ENCODE measurements at regions of chr2 and their contacts with region 1.

Region 1: DNA sequence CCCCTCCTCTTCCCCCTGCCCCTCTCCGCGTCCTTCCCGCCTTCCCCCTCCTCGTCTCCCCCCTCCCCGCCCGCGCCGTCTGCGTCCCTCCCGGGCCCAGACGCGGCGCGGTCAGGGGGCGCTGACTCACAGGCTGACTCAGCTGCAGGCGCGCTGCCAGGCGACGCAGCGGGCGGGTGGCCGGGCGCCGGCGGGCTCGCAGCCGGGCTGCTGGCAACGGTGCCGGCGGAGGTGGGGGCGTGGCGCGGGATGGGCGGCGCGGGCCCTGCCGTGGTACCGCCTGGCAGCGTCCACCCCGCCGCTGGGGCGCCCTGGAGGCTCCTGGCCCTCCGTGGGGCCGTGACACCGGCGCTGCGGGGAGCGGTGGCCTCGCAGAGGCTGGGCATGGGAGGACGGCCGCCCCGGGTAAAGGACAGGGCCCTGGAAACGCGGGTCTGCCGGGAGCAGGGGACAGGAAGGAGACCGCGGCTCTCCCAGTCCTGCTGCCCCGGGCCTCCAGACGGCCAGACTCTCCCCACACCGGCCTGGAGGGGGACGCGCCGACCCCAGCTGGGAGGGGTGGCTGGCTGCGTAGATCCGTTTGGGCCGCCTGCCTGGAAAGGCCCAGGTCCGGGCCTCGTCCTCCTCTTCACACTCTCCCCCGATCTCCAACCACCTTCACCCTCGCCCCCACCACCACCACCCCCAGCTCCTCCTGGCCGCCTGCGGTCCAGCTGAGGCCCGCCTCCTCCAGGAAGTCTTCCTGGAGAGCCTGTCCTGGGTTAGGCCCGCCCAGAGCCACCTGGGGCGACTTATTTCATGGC is 10.0 kb upstream of the PROC start:
- DNase-seq: peak; percentile 94
- ATAC-seq: peak; percentile 87
- H3K4me3 Mint-ChIP-seq: no peak overlapping the region
- H3K27ac Mint-ChIP-seq: peak overlapping the region; percentile 67
- H3K4me1 Mint-ChIP-seq: peaks cover 32% of the 10 kb centered on the region
- H3K27me3 Mint-ChIP-seq: peaks cover 6% of the 10 kb centered on the region

Region 2: DNA sequence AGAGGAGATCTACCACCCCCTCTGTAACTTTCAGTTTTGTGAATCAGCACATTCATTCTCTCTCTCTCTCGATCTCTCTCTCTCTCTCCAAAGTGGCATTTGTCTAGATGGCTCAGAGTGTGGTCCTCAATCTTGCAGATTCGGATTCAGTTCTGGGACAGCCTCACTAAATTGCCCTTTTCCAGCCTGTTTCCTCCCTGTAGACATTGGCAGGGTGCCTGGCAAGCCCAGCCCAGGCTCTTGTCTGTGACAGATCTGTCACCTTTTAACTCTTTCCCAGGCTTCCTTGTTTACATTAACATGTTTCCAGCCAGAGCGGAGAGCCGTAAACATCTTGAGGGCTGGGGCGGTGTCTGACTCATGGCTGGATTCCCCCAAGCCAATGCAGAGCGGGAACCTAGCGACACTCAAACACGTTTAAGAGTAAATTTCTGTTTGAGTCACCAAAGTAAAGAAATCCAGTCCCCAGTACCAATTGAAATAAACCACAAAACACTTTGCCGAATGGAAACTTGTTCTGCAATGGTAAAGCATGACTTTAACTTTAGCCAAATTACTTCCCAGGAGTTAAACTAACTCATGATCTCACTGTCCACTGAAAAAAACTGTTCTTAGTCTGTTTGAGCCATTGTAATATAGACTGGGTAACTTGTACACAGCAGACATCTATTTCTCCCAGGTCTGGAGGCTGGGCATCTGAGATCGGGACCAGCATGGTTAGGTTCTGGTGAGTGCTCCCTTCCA is 181.5 kb before region 1 on chr2:
- CTCF ChIA-PET with region 1: no interaction called
- POLR2A ChIA-PET with region 1: no interaction called
- intact Hi-C with region 1: loop called in 1 of 2 experiments (anchors 2 kb)
- DNase-seq: peak; percentile 78
- ATAC-seq: peak; percentile 94
- H3K4me3 Mint-ChIP-seq: peak overlapping the region; percentile 30
- H3K27ac Mint-ChIP-seq: no peak overlapping the region
- H3K4me1 Mint-ChIP-seq: peaks cover 11% of the 10 kb centered on the region
- H3K27me3 Mint-ChIP-seq: peaks cover 31% of the 10 kb centered on the region

Region 3: DNA sequence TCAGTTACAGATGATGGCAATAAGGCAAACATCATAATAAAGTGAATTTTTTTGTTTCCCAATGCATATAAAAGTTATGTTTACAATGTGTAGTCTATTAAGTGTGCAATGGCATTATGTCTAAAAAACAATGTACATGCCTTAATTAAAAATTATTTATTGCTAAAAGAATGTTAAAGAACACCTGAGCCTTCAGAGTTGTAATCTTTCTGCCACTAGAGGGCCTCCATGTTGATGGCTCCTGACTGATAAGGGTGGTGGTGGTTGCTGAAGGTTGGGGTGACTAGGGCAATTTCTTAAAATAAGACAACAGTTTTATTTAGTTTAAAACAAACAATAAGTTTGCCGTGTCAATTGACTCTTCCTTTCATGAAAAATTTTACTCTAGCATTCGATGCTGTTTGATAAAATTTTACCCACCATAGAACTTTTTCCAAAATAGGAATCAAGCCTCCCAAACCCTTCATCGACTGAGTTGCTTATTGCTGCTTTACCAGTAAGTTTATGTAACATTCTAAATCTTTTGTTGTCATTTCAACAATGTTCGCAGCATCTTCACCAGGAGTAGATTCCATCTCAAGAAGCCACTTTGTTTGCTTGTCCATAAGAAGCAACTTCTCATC is 52.7 kb before region 1 on chr2:
- CTCF ChIA-PET with region 1: interaction called, 3 read pairs
- POLR2A ChIA-PET with region 1: no interaction called
- intact Hi-C with region 1: loop called in 1 of 2 experiments (anchors 2 kb)
- DNase-seq: peak; percentile 45
- ATAC-seq: peak; percentile 65
- H3K4me3 Mint-ChIP-seq: no peak overlapping the region
- H3K27ac Mint-ChIP-seq: no peak overlapping the region
- H3K4me1 Mint-ChIP-seq: peaks cover 53% of the 10 kb centered on the region
- H3K27me3 Mint-ChIP-seq: no peaks in the 10 kb centered on the region

Region 4: DNA sequence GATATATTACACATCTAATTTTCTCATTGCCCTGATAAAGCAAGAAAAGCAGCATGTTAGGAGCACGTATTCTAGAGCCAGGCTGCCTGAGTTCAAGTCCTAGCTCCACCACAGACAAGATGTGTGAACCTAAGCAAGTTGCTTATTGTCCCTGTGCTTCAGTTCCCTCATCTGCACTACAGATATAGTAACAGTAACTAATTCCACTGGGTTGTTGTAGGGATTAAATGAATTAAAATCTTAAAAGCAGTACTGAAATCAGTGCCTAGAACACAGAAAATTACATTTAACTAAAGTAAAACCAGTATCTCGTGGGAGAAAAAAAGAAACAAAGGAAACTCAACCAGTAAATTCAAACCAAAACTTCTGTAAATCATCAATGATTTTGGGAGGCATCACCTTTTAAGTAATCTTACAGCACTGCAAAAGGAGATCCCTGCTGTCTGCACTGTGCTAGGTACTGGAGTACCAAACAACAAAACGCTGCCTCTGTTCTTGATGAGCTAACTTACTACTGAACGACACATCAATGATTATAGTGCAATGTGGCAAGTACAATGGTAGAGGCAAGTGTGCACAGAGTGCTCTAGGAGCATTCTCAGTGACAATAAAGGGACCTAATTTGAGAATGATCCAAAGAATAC is 28.4 kb before region 1 on chr2:
- CTCF ChIA-PET with region 1: no interaction called
- POLR2A ChIA-PET with region 1: no interaction called
- intact Hi-C with region 1: no loop called
- DNase-seq: no peak
- ATAC-seq: peak; percentile 86
- H3K4me3 Mint-ChIP-seq: no peak overlapping the region
- H3K27ac Mint-ChIP-seq: peak overlapping the region; percentile 58
- H3K4me1 Mint-ChIP-seq: peaks cover 62% of the 10 kb centered on the region
- H3K27me3 Mint-ChIP-seq: no peaks in the 10 kb centered on the region

Measured in activated CD4-positive, alpha-beta T cell treated with anti-CD3 and anti-CD28 coated beads for 36 hours (primary cell).